T-cell (primary cell): ENCODE measurements at regions of chr2 and their contacts with region 1.

Region 1: GRCh38 chr2:197209742-197210408 is 100.7 kb downstream of the ANKRD44 start:
- DNase-seq: peak in 8 of 35 experiments; percentile 9 to 64 (median 27)
- ATAC-seq: peak; percentile 8 to 35 (median 28)
- H3K4me3 ChIP-seq: no peak overlapping the region
- H3K4me3 Mint-ChIP-seq: peak overlapping the region; percentile 52 to 79 (median 63)
- H3K27ac ChIP-seq: peak overlapping the region; percentile 95
- H3K27ac Mint-ChIP-seq: peak overlapping the region; percentile 98 to 99
- H3K4me1 ChIP-seq: peaks cover 84 to 94% of the 10 kb centered on the region in 2 experiments
- H3K4me1 Mint-ChIP-seq: peaks cover 97 to 99% (median 99%) of the 10 kb centered on the region in 3 donors
- H3K27me3 ChIP-seq: no peaks in the 10 kb centered on the region
- H3K27me3 Mint-ChIP-seq: no peaks in the 10 kb centered on the region

Region 2: GRCh38 chr2:197229509-197230443 is 19.9 kb after region 1 on chr2:
- CTCF ChIA-PET with region 1: interaction called, 3 to 12 read pairs
- POLR2A ChIA-PET with region 1: interaction called, 3 to 6 read pairs
- DNase-seq: no peak
- ATAC-seq: no peak
- H3K4me3 ChIP-seq: no peak overlapping the region
- H3K4me3 Mint-ChIP-seq: peak overlapping the region; percentile 9 to 31 (median 20)
- H3K27ac ChIP-seq: no peak overlapping the region
- H3K27ac Mint-ChIP-seq: peak overlapping the region; percentile 89 to 93
- H3K4me1 ChIP-seq: peaks cover 64 to 67% of the 10 kb centered on the region in 2 experiments
- H3K4me1 Mint-ChIP-seq: peaks cover 94 to 98% (median 96%) of the 10 kb centered on the region in 3 donors
- H3K27me3 ChIP-seq: no peaks in the 10 kb centered on the region
- H3K27me3 Mint-ChIP-seq: no peaks in the 10 kb centered on the region

Region 3: DNA sequence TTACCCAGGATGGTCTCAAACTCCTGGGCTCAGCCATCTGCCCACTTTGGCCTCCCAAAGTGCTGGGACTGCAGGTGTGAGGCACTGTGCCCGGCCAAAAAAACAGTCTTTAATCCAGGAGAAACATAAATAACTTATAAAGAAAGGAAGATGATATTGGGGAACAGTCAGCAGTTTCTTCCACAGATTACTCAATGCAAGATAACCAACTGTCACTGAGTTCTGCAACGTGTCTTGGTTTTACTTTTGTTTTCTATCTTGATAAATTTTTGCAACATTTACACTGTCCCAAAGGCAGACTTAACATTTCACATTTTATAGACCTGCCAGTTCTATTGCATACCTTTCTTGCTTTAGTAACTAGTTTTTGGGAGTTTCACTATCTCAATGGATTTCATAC is 29.6 kb after region 1 on chr2:
- CTCF ChIA-PET with region 1: interaction called, 4 to 11 read pairs
- POLR2A ChIA-PET with region 1: interaction called, 9 read pairs
- DNase-seq: peak in 1 of 35 experiments; percentile 53
- ATAC-seq: peak in 3 of 4 experiments; percentile 27 to 33 (median 30)
- H3K4me3 ChIP-seq: peak overlapping the region; percentile 23 to 53
- H3K4me3 Mint-ChIP-seq: peak overlapping the region; percentile 74 to 80 (median 78)
- H3K27ac ChIP-seq: peak overlapping the region; percentile 95
- H3K27ac Mint-ChIP-seq: peak overlapping the region; percentile 93 to 98
- H3K4me1 ChIP-seq: peaks cover 68 to 85% of the 10 kb centered on the region in 2 experiments
- H3K4me1 Mint-ChIP-seq: peaks cover 86 to 90% (median 88%) of the 10 kb centered on the region in 3 donors
- H3K27me3 ChIP-seq: no peaks in the 10 kb centered on the region
- H3K27me3 Mint-ChIP-seq: no peaks in the 10 kb centered on the region

Region 4: DNA sequence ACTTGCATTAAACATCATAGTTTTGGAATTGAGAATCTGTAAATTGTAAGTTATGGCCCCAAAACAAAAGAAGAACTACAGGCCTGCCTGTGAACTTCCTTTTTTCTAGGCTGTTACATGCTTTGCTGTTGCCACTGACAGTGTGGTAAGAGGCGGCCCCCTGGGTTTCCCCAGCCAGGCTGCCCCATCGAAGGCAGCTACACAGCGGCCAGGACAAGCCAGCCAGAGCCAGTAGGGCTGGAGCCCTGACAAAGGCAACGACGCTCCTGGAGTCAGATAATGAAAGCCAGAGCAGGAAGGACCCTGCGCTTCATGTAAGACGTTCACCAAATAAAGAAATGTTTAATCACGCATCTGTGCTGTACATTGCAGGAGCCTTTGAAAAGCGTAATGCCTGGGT is 45.7 kb after region 1 on chr2:
- CTCF ChIA-PET with region 1: interaction called, 6 to 10 read pairs
- POLR2A ChIA-PET with region 1: interaction called, 3 to 4 read pairs
- DNase-seq: peak; percentile 35 to 87 (median 72)
- ATAC-seq: peak; percentile 72 to 92 (median 82)
- H3K4me3 ChIP-seq: peak overlapping the region; percentile 24 to 29
- H3K4me3 Mint-ChIP-seq: peak overlapping the region; percentile 77 to 83 (median 77)
- H3K27ac ChIP-seq: peak overlapping the region; percentile 95
- H3K27ac Mint-ChIP-seq: peak overlapping the region; percentile 97 to 98
- H3K4me1 ChIP-seq: peaks cover 50 to 66% of the 10 kb centered on the region in 2 experiments
- H3K4me1 Mint-ChIP-seq: peaks cover 78 to 86% (median 83%) of the 10 kb centered on the region in 3 donors
- H3K27me3 ChIP-seq: no peaks in the 10 kb centered on the region
- H3K27me3 Mint-ChIP-seq: no peaks in the 10 kb centered on the region

Region 5: DNA sequence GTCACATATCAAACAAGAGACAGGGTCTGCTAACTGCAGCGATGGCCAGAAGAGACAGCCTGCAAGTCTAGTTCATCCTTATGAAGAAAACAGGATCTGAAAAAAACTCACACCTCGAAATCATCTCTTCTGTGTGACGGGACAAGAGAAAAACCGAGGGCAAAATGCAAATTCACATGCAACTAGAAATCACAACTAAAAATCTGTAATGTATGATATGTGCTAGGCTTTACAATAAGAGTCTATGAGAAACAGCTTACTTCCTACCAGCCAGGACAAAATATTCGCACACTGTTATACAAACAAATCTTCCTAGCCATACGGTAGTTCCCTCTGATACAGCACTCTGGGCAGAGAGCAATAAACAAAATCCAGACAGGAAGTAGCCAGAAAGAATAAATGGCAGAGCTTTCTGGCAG is 51.9 kb after region 1 on chr2:
- CTCF ChIA-PET with region 1: interaction called, 6 to 13 read pairs
- POLR2A ChIA-PET with region 1: interaction called, 3 to 7 read pairs
- DNase-seq: peak in 1 of 35 experiments; percentile 47
- ATAC-seq: peak; percentile 45 to 51 (median 48)
- H3K4me3 ChIP-seq: no peak overlapping the region
- H3K4me3 Mint-ChIP-seq: peak overlapping the region; percentile 26 to 61 (median 35)
- H3K27ac ChIP-seq: peak overlapping the region; percentile 88
- H3K27ac Mint-ChIP-seq: peak overlapping the region; percentile 87 to 91
- H3K4me1 ChIP-seq: peaks cover 61 to 72% of the 10 kb centered on the region in 2 experiments
- H3K4me1 Mint-ChIP-seq: peaks cover 82 to 85% (median 84%) of the 10 kb centered on the region in 3 donors
- H3K27me3 ChIP-seq: no peaks in the 10 kb centered on the region
- H3K27me3 Mint-ChIP-seq: no peaks in the 10 kb centered on the region

Region 6: DNA sequence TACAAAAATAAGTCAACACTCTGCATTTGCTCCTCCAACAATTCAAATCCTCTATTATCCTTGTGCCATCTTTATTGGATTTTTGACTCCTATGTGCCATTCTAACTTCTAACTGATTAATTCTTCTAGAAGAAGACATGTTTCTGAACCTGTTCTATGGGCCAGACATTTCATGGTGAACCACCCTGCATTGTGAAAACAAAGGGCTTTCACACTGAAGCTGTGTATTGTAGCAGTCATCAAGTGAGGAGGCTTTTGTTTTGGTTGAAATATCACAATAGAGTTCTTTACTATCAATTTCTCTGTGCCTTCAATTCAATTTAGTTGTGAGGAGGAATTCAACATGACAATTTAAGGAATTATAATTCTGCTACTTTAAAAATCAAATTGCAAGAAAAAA is 952.4 kb after region 1 on chr2:
- CTCF ChIA-PET with region 1: no interaction called
- POLR2A ChIA-PET with region 1: no interaction called
- DNase-seq: no peak
- ATAC-seq: no peak
- H3K4me3 ChIP-seq: no peak overlapping the region
- H3K4me3 Mint-ChIP-seq: no peak overlapping the region
- H3K27ac ChIP-seq: no peak overlapping the region
- H3K27ac Mint-ChIP-seq: no peak overlapping the region
- H3K4me1 ChIP-seq: no peaks in the 10 kb centered on the region
- H3K4me1 Mint-ChIP-seq: no peaks in the 10 kb centered on the region
- H3K27me3 ChIP-seq: no peaks in the 10 kb centered on the region
- H3K27me3 Mint-ChIP-seq: no peaks in the 10 kb centered on the region